ENCODE measurements at regions of chr10 and their contacts with region 1.

Region 1: DNA sequence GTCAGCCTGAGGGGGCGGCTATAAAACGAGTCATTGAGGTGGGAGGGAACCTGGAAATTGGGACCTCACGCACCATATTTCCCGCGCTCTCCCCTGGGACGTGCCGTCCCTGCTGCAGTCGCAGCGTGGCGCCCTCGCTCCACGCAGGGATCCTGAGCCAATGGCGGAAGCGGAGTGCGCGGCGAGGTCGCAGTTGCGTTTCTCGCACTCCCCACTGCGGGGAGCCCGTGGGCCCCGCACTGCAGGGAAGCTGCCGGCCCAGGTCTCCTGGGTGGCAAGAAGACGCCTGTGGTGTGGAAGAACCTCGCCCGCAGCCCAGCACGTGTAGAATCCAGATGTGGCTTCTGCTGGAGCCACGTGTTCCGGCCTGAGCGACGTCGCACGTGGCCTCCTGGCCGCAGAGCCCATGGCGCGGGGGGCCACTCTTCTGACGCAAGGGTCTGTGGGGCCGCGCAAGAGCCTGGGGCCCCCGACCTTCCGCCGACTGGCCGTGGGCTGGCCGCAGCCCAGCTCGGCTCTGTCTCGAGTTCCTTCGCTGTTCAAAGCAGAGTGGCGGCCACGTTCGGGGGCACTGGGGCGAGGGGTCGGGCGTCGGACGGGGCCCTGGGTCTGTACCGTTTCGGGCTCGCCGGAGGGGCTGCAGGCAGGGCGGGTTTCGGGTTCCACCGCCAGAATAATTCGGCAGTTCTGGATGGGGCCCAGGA is 26.4 kb downstream of the HIF1AN start:
- DNase-seq: peak; percentile 36 to 81
- H3K4me3 ChIP-seq: no peak overlapping the region
- H3K27ac ChIP-seq: no peak overlapping the region
- H3K4me1 ChIP-seq: peaks cover 0 to 4% (median 0%) of the 10 kb centered on the region in 4 experiments; a peak in 2 of 7 replicates
- H3K27me3 ChIP-seq: peaks cover 0 to 16% (median 9%) of the 10 kb centered on the region in 4 experiments; a peak in 5 of 7 replicates
- CTCF ChIP-seq: peak; percentile 98 to 100 (median 99)
- EP300 ChIP-seq: no peak
- POLR2A ChIP-seq: no peak; a peak in 1 of 3 replicates
- RAD21 ChIP-seq: peak; percentile 96 to 97

Region 2: GRCh38 chr10:100373298-100374136 is 188.6 kb before region 1 on chr10:
- CTCF ChIA-PET with region 1: no interaction called
- POLR2A ChIA-PET with region 1: no interaction called
- DNase-seq: peak; percentile 91 to 98
- H3K4me3 ChIP-seq: peak overlapping the region; percentile 63 to 71 (median 66)
- H3K27ac ChIP-seq: peak overlapping the region; percentile 90
- H3K4me1 ChIP-seq: peaks cover 8 to 25% (median 9%) of the 10 kb centered on the region in 4 experiments
- H3K27me3 ChIP-seq: no peaks in the 10 kb centered on the region
- CTCF ChIP-seq: no peak
- EP300 ChIP-seq: peak in 1 of 2 experiments; percentile 10; a peak in 1 of 3 replicates
- POLR2A ChIP-seq: peak; percentile 44 to 58; a peak in 2 of 3 replicates
- RAD21 ChIP-seq: no peak

Region 3: GRCh38 chr10:100544950-100545349 is 17.2 kb before region 1 on chr10:
- CTCF ChIA-PET with region 1: interaction called, 57 read pairs
- POLR2A ChIA-PET with region 1: interaction called, 41 read pairs
- DNase-seq: no peak
- H3K4me3 ChIP-seq: no peak overlapping the region
- H3K27ac ChIP-seq: no peak overlapping the region
- H3K4me1 ChIP-seq: no peaks in the 10 kb centered on the region
- H3K27me3 ChIP-seq: no peaks in the 10 kb centered on the region
- CTCF ChIP-seq: no peak
- EP300 ChIP-seq: no peak
- POLR2A ChIP-seq: no peak
- RAD21 ChIP-seq: no peak

Region 4: DNA sequence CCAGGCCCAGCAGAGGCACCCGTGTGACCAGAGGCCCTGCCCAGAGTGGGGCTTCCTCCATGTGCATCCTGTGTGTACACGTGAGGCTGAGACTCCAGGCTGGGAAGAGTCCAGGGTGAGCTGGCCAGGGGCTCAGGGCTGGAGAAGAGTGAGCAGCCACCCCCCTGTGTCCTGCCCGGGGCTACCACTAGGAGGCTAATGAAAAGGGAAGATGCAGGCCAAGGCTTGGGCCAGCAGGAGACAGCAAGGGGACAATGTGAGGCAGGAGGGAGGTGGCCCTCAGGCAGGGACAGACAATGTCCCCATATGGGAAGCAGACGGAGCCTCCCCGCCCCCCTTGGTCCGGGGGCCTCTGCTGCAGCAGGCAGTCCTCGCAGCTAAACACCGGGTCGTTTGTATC is 75.6 kb after region 1 on chr10:
- CTCF ChIA-PET with region 1: interaction called, 88 read pairs
- POLR2A ChIA-PET with region 1: interaction called, 3 read pairs
- DNase-seq: peak; percentile 29 to 87
- H3K4me3 ChIP-seq: no peak overlapping the region; a peak in 1 of 8 replicates
- H3K27ac ChIP-seq: no peak overlapping the region
- H3K4me1 ChIP-seq: peaks cover 8 to 19% (median 12%) of the 10 kb centered on the region in 4 experiments
- H3K27me3 ChIP-seq: peaks cover 0 to 6% (median 2%) of the 10 kb centered on the region in 4 experiments; a peak in 1 of 7 replicates
- CTCF ChIP-seq: peak; percentile 95 to 98 (median 97)
- EP300 ChIP-seq: no peak
- POLR2A ChIP-seq: no peak
- RAD21 ChIP-seq: peak; percentile 60 to 77

Region 5: DNA sequence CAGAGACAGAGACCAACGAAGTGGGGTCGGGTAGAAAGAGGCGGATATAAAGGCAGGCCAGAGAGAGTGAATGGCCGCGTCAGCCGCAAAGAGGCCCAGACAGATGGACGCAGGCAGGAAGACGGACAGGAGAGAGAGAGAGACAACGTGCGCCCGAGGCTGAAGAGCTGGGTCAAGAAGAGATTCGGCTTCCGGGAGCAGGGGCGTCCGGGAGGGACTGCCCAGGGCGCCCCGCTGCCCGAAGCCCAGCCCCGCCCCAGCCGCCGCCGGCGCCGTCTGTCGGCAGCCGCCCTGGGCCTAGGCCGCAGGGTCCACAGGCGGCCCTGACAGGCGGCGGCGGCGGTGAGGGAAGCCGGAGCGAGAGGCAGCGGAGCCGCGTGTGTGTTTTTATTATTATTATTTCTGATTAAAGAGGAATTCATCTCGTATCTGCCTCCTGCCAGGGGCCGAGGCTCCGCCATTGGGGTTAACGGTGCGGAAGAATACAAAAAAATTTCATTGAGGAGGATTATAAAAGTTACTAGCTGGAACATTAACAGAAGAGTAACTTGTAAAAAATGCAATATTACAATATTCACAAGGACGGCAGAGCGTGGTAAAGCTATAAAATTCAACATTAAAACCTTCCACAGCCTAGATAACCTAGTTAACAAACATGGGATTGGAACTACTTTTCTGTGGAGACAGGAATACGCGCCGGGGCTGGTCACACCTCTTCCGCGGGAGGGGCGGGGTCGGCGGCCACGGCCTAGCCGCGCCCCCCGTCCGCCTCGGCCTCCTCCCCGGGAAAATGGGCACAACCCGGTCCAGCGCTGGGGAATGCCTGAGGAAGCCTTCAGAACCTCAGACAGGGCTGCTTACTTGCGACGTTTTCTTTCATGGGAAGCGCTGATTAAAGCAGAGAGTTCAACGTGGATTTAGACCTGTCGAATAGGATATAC is 153.6 kb after region 1 on chr10:
- CTCF ChIA-PET with region 1: interaction called, 11 read pairs
- POLR2A ChIA-PET with region 1: interaction called, 7 read pairs
- DNase-seq: peak in 1 of 2 experiments; percentile 80
- H3K4me3 ChIP-seq: peak overlapping the region; percentile 41 to 65 (median 51)
- H3K27ac ChIP-seq: no peak overlapping the region
- H3K4me1 ChIP-seq: peaks cover 0 to 5% (median 3%) of the 10 kb centered on the region in 4 experiments; a peak in 1 of 7 replicates
- H3K27me3 ChIP-seq: peaks cover 72 to 91% (median 88%) of the 10 kb centered on the region in 4 experiments
- CTCF ChIP-seq: no peak
- EP300 ChIP-seq: no peak
- POLR2A ChIP-seq: no peak
- RAD21 ChIP-seq: no peak

Region 6: GRCh38 chr10:100817268-100817839 is 255.2 kb after region 1 on chr10:
- CTCF ChIA-PET with region 1: interaction called, 53 read pairs
- POLR2A ChIA-PET with region 1: interaction called, 3 read pairs
- DNase-seq: no peak
- H3K4me3 ChIP-seq: no peak overlapping the region
- H3K27ac ChIP-seq: no peak overlapping the region
- H3K4me1 ChIP-seq: peaks cover 0 to 5% (median 1%) of the 10 kb centered on the region in 4 experiments; a peak in 1 of 7 replicates
- H3K27me3 ChIP-seq: peaks cover 6 to 41% (median 18%) of the 10 kb centered on the region in 4 experiments
- CTCF ChIP-seq: peak; percentile 84 to 87 (median 86)
- EP300 ChIP-seq: no peak
- POLR2A ChIP-seq: no peak
- RAD21 ChIP-seq: peak; percentile 88 to 94

Region 7: GRCh38 chr10:100872034-100872791 is 310.1 kb after region 1 on chr10:
- CTCF ChIA-PET with region 1: interaction called, 81 read pairs
- POLR2A ChIA-PET with region 1: interaction called, 29 read pairs
- DNase-seq: peak; percentile 27 to 92
- H3K4me3 ChIP-seq: no peak overlapping the region
- H3K27ac ChIP-seq: no peak overlapping the region
- H3K4me1 ChIP-seq: peaks cover 0 to 12% (median 7%) of the 10 kb centered on the region in 4 experiments; a peak in 5 of 7 replicates
- H3K27me3 ChIP-seq: peaks cover 0 to 29% (median 17%) of the 10 kb centered on the region in 4 experiments; a peak in 6 of 7 replicates
- CTCF ChIP-seq: peak; percentile 69 to 86 (median 84)
- EP300 ChIP-seq: no peak
- POLR2A ChIP-seq: no peak
- RAD21 ChIP-seq: peak; percentile 84 to 85